ENCODE measurements at regions of chr2 and their contacts with region 1.

Region 1: DNA sequence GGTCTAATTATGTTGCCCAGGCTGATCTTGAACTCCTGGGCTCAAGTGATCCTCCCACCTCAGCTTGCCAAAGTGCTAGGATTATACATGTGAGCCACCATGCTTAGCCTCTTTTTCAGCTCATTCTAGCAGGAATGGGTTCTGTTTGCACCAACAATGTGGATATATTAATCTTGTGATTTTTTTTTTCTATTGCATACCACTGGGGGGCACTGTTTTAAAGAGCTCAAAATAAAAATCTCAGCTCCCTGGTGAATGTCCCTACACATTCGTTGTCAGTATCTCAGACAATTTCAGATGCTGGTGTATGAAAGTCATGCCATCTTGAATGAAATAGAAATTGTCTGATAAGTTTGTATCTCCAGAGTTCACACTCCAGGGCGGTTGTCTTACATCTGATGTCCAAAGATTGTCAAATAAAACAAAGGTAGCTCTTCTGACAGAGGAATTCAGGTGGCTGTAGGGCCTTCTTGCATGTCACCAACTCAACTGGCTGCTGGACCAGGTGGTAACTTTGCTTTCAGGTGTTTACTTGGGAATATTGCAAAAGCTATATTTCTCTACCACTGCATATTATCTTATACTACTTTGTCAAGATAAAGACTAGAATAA is 3.1 kb upstream of the MATN3 start:
- DNase-seq: peak in 2 of 9 experiments; percentile 45 to 65
- ATAC-seq: peak; percentile 61
- H3K4me3 ChIP-seq: no peak overlapping the region
- H3K4me3 Mint-ChIP-seq: no peak overlapping the region
- H3K27ac ChIP-seq: no peak overlapping the region
- H3K27ac Mint-ChIP-seq: no peak overlapping the region
- H3K4me1 ChIP-seq: peaks cover 8% of the 10 kb centered on the region
- H3K4me1 Mint-ChIP-seq: peaks cover 12% of the 10 kb centered on the region
- H3K27me3 ChIP-seq: peaks cover 2 to 9% of the 10 kb centered on the region in 2 experiments
- H3K27me3 Mint-ChIP-seq: peaks cover 28% of the 10 kb centered on the region
- CTCF ChIP-seq: peak; percentile 58

Region 2: GRCh38 chr2:19911799-19912509 is 103.6 kb before region 1 on chr2:
- CTCF ChIA-PET with region 1: no interaction called
- POLR2A ChIA-PET with region 1: no interaction called
- intact Hi-C with region 1: no loop called
- DNase-seq: no peak
- ATAC-seq: no peak
- H3K4me3 ChIP-seq: no peak overlapping the region
- H3K4me3 Mint-ChIP-seq: no peak overlapping the region
- H3K27ac ChIP-seq: no peak overlapping the region
- H3K27ac Mint-ChIP-seq: no peak overlapping the region
- H3K4me1 ChIP-seq: no peaks in the 10 kb centered on the region
- H3K4me1 Mint-ChIP-seq: no peaks in the 10 kb centered on the region
- H3K27me3 ChIP-seq: no peaks in the 10 kb centered on the region
- H3K27me3 Mint-ChIP-seq: no peaks in the 10 kb centered on the region
- CTCF ChIP-seq: no peak

Region 3: GRCh38 chr2:19963386-19963785 is 52.2 kb before region 1 on chr2:
- CTCF ChIA-PET with region 1: interaction called, 3 read pairs
- POLR2A ChIA-PET with region 1: no interaction called
- intact Hi-C with region 1: loop called in 1 of 2 experiments (anchors 2 kb)
- DNase-seq: no peak
- ATAC-seq: no peak
- H3K4me3 ChIP-seq: no peak overlapping the region
- H3K4me3 Mint-ChIP-seq: no peak overlapping the region
- H3K27ac ChIP-seq: no peak overlapping the region
- H3K27ac Mint-ChIP-seq: no peak overlapping the region
- H3K4me1 ChIP-seq: no peaks in the 10 kb centered on the region
- H3K4me1 Mint-ChIP-seq: no peaks in the 10 kb centered on the region
- H3K27me3 ChIP-seq: no peaks in the 10 kb centered on the region
- H3K27me3 Mint-ChIP-seq: no peaks in the 10 kb centered on the region
- CTCF ChIP-seq: no peak

Region 4: GRCh38 chr2:20001361-20001863 is 14.2 kb before region 1 on chr2:
- CTCF ChIA-PET with region 1: interaction called, 15 read pairs
- POLR2A ChIA-PET with region 1: no interaction called
- intact Hi-C with region 1: no loop called
- DNase-seq: no peak
- ATAC-seq: no peak
- H3K4me3 ChIP-seq: no peak overlapping the region
- H3K4me3 Mint-ChIP-seq: no peak overlapping the region
- H3K27ac ChIP-seq: no peak overlapping the region
- H3K27ac Mint-ChIP-seq: no peak overlapping the region
- H3K4me1 ChIP-seq: no peaks in the 10 kb centered on the region
- H3K4me1 Mint-ChIP-seq: no peaks in the 10 kb centered on the region
- H3K27me3 ChIP-seq: peaks cover 0 to 3% of the 10 kb centered on the region in 2 experiments
- H3K27me3 Mint-ChIP-seq: peaks cover 21% of the 10 kb centered on the region
- CTCF ChIP-seq: no peak

Region 5: DNA sequence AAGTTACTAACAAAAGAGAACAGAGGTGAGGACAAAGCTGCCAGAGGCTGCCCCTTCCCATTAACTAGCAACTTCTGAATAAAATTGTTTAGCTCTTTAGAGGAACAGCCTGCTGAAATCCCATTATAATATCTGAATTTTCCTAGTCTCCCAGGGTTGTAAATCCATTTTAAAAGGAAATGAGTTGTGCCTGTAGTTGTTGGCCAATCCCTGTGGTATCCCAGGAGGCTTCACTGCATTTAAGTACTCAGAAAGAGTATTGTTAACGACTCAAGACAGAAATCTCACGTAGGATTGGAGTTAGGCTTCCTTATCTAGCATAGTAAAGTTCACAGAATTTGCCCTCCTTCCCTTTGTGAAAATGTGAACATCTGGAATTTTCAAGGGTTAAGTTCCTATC is 27.0 kb after region 1 on chr2:
- CTCF ChIA-PET with region 1: interaction called, 12 read pairs
- POLR2A ChIA-PET with region 1: no interaction called
- intact Hi-C with region 1: no loop called
- DNase-seq: no peak
- ATAC-seq: no peak
- H3K4me3 ChIP-seq: no peak overlapping the region
- H3K4me3 Mint-ChIP-seq: no peak overlapping the region
- H3K27ac ChIP-seq: no peak overlapping the region
- H3K27ac Mint-ChIP-seq: no peak overlapping the region
- H3K4me1 ChIP-seq: no peaks in the 10 kb centered on the region
- H3K4me1 Mint-ChIP-seq: peaks cover 40% of the 10 kb centered on the region
- H3K27me3 ChIP-seq: no peaks in the 10 kb centered on the region
- H3K27me3 Mint-ChIP-seq: no peaks in the 10 kb centered on the region
- CTCF ChIP-seq: no peak

Measured in CD8-positive, alpha-beta T cell (primary cell).